B cell (primary cell): ENCODE measurements at regions of chr2 and their contacts with region 1.

Region 1: GRCh38 chr2:65040400-65041261 is 15.6 kb upstream of the CEP68 start:
- DNase-seq: peak; percentile 86
- ATAC-seq: peak; percentile 99
- H3K4me3 ChIP-seq: no peak overlapping the region
- H3K4me3 Mint-ChIP-seq: no peak overlapping the region
- H3K27ac ChIP-seq: no peak overlapping the region
- H3K27ac Mint-ChIP-seq: peak overlapping the region; percentile 42
- H3K4me1 ChIP-seq: peaks cover 5% of the 10 kb centered on the region in 2 donors
- H3K4me1 Mint-ChIP-seq: peaks cover 18% of the 10 kb centered on the region
- H3K27me3 ChIP-seq: no peaks in the 10 kb centered on the region
- H3K27me3 Mint-ChIP-seq: no peaks in the 10 kb centered on the region
- CTCF ChIP-seq: peak; percentile 96

Region 2: DNA sequence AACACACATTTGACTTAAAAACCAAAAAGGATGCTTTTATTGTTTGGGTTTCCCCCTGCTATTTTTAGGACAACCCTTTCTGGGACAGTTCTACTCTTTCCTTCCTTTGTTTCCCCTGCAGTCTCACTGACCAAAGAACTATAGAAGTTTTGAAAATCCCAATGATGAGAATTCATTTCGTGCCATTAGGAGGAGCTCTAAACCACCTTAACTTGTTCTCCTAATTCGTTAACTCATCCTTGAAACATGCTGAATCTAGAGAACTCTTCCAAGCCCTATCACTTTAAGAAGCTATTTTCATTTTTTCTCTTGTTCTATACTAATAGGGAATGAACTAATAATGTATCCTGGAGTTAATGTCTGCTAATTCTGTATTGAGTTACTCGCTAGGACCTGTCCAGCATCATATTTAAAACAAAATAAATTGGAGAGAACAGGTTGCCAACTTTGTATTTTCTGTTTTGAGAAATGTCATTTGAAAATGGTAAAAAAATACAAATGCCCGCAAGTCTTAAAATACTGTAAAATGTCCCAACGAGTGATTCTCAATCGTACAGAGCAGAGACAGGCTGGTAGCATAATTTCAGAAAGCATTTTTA is 453.6 kb before region 1 on chr2:
- CTCF ChIA-PET with region 1: interaction called, 4 read pairs
- POLR2A ChIA-PET with region 1: no interaction called
- intact Hi-C with region 1: loop called (anchors 5 kb)
- DNase-seq: peak; percentile 72
- ATAC-seq: peak; percentile 58
- H3K4me3 ChIP-seq: no peak overlapping the region
- H3K4me3 Mint-ChIP-seq: no peak overlapping the region
- H3K27ac ChIP-seq: no peak overlapping the region
- H3K27ac Mint-ChIP-seq: peak overlapping the region; percentile 32
- H3K4me1 ChIP-seq: peaks cover 0 to 4% of the 10 kb centered on the region in 2 donors
- H3K4me1 Mint-ChIP-seq: peaks cover 14% of the 10 kb centered on the region
- H3K27me3 ChIP-seq: no peaks in the 10 kb centered on the region
- H3K27me3 Mint-ChIP-seq: no peaks in the 10 kb centered on the region
- CTCF ChIP-seq: peak; percentile 88

Region 3: DNA sequence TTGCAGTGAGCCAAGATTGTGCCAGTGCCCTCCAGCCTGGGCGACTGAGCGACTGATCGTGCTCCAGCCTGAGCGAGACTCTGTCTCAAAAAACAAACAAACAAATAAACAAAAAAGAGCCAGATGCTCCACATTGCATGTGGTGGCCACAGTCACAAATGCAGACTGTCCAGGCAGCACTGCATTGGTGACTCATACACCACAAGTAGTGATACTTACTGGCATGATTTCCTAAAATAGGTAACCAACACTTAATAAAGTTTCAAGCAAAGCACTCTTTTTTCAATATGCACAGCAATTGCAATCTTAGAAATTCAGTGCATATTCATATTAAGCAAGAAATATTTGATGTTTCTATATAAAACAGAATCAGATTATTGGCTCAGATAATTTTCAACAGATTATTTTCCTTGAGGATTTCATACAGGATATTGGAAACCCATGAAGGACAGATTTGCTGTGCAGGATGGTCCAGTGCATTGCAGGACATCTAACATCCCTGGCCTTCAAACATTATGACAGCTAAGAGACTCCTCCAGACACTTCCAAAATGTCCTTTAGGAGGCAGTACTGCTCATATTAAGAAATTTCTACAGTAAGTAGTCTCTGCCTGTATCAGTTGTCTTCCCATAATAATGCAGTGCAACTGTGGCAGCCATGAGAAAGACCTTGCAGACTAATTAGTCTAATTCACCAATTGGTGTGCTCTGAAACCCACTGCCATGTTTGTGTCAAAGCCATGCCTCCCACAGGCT is 61.9 kb before region 1 on chr2:
- CTCF ChIA-PET with region 1: interaction called, 10 read pairs
- POLR2A ChIA-PET with region 1: no interaction called
- intact Hi-C with region 1: no loop called
- DNase-seq: peak; percentile 27
- ATAC-seq: no peak
- H3K4me3 ChIP-seq: no peak overlapping the region
- H3K4me3 Mint-ChIP-seq: no peak overlapping the region
- H3K27ac ChIP-seq: no peak overlapping the region
- H3K27ac Mint-ChIP-seq: no peak overlapping the region
- H3K4me1 ChIP-seq: no peaks in the 10 kb centered on the region
- H3K4me1 Mint-ChIP-seq: peaks cover 6% of the 10 kb centered on the region
- H3K27me3 ChIP-seq: no peaks in the 10 kb centered on the region
- H3K27me3 Mint-ChIP-seq: no peaks in the 10 kb centered on the region
- CTCF ChIP-seq: peak; percentile 33

Region 4: GRCh38 chr2:64988420-64989125 is 52.1 kb before region 1 on chr2:
- CTCF ChIA-PET with region 1: interaction called, 6 read pairs
- POLR2A ChIA-PET with region 1: no interaction called
- intact Hi-C with region 1: loop called (anchors 1 kb)
- DNase-seq: peak; percentile 75
- ATAC-seq: peak; percentile 33
- H3K4me3 ChIP-seq: peak overlapping the region; percentile 53 to 87 (median 81)
- H3K4me3 Mint-ChIP-seq: peak overlapping the region; percentile 92
- H3K27ac ChIP-seq: peak overlapping the region in 1 of 2 donors; percentile 53
- H3K27ac Mint-ChIP-seq: peak overlapping the region; percentile 84
- H3K4me1 ChIP-seq: peaks cover 17 to 24% of the 10 kb centered on the region in 2 donors
- H3K4me1 Mint-ChIP-seq: peaks cover 37% of the 10 kb centered on the region
- H3K27me3 ChIP-seq: no peaks in the 10 kb centered on the region
- H3K27me3 Mint-ChIP-seq: no peaks in the 10 kb centered on the region
- CTCF ChIP-seq: peak; percentile 48

Region 5: DNA sequence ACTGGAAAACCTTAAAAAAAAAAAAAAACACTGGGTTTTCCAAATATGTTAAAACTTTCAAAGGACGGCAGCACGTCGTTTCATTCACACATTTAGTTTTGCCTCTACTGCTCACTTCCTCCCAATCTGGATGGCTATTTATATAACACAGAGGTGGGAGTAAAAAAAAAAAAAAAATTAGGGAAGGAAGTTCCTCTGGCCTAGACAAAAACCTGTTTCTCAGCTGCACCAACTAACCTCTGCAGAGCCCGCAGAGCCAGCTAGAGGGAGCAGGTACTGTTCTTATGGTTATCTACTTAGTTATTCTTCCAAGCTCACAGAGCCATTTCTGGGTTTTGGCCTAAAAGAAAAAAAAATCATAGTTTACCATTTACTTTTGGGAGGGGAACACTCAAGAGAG is 23.3 kb before region 1 on chr2:
- CTCF ChIA-PET with region 1: interaction called, 115 read pairs
- POLR2A ChIA-PET with region 1: interaction called, 4 read pairs
- intact Hi-C with region 1: loop called (anchors 1 kb)
- DNase-seq: peak; percentile 73
- ATAC-seq: peak; percentile 82
- H3K4me3 ChIP-seq: no peak overlapping the region
- H3K4me3 Mint-ChIP-seq: peak overlapping the region; percentile 55
- H3K27ac ChIP-seq: no peak overlapping the region
- H3K27ac Mint-ChIP-seq: peak overlapping the region; percentile 72
- H3K4me1 ChIP-seq: peaks cover 29 to 35% of the 10 kb centered on the region in 2 donors
- H3K4me1 Mint-ChIP-seq: peaks cover 48% of the 10 kb centered on the region
- H3K27me3 ChIP-seq: no peaks in the 10 kb centered on the region
- H3K27me3 Mint-ChIP-seq: no peaks in the 10 kb centered on the region
- CTCF ChIP-seq: peak; percentile 69

Region 6: DNA sequence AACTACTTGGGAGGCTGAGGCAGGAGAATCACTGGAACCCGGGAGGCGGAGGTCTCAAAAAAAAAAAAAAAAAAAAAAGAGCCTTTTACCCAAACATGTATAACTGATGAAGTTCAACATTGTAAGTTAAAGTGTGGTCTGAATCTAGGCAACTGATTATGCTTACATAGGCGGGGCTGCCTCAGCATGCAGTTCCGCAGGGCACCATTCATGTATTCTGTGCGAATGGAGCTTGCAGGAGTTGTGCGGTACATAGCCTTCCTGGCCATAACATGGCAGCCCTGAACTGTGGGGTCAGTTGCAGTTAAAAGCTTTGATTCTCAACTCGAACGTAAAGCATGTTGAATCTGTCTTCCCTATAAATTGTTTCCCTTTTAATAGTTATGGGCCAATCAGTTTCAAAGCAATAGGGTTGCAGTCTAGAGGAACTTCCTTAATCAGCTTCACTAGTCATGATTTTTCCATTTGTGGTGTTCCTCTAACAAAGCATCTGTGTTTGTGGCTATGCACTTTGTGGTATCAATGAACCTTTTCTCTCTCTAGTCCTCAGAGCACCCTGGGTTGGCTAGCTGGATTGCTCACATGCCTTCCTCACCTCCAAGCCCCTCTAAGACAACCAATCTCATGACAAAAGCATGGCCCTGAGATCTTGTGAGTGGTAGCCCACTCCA is 15.0 kb before region 1 on chr2:
- CTCF ChIA-PET with region 1: interaction called, 115 read pairs
- POLR2A ChIA-PET with region 1: interaction called, 3 read pairs
- intact Hi-C with region 1: loop called (anchors 2 kb)
- DNase-seq: peak; percentile 66
- ATAC-seq: peak; percentile 31
- H3K4me3 ChIP-seq: peak overlapping the region in 1 of 5 experiments; percentile 24
- H3K4me3 Mint-ChIP-seq: peak overlapping the region; percentile 72
- H3K27ac ChIP-seq: peak overlapping the region; percentile 75 to 86
- H3K27ac Mint-ChIP-seq: peak overlapping the region; percentile 90
- H3K4me1 ChIP-seq: peaks cover 55 to 69% of the 10 kb centered on the region in 2 donors
- H3K4me1 Mint-ChIP-seq: peaks cover 56% of the 10 kb centered on the region
- H3K27me3 ChIP-seq: no peaks in the 10 kb centered on the region
- H3K27me3 Mint-ChIP-seq: no peaks in the 10 kb centered on the region
- CTCF ChIP-seq: no peak

Region 7: GRCh38 chr2:65159906-65160305 is 119.3 kb after region 1 on chr2:
- CTCF ChIA-PET with region 1: no interaction called
- POLR2A ChIA-PET with region 1: no interaction called
- intact Hi-C with region 1: no loop called
- DNase-seq: no peak
- ATAC-seq: no peak
- H3K4me3 ChIP-seq: no peak overlapping the region
- H3K4me3 Mint-ChIP-seq: no peak overlapping the region
- H3K27ac ChIP-seq: no peak overlapping the region
- H3K27ac Mint-ChIP-seq: no peak overlapping the region
- H3K4me1 ChIP-seq: peaks cover 5 to 22% of the 10 kb centered on the region in 2 donors
- H3K4me1 Mint-ChIP-seq: peaks cover 24% of the 10 kb centered on the region
- H3K27me3 ChIP-seq: no peaks in the 10 kb centered on the region
- H3K27me3 Mint-ChIP-seq: no peaks in the 10 kb centered on the region
- CTCF ChIP-seq: no peak

Region 8: DNA sequence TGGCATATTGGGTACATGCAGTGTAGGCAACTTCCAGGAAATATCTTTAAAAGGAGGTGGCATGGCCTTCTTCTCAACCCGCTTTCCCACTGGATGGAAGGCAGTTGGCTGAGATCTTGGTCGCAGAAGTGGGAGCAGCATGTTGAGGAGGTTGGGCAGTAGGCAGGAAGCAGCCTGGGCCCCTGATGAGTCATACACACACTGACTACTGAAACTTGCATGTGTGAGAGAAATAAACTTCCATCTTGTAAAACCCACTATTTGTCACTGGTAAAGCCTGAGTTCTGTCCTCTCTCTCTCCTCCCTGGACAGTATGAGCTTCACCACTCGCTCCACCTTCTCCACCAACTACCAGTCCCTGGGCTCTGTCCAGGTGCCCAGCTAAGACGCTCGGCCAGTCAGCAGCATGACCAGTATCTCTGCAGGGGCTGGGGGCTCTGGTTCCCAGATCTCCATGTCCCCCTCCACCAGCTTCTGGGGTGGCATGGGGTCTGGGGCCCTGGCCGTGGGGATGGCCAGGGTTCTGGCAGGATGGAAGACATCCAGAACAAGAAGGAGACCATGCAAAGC is 625.6 kb after region 1 on chr2:
- CTCF ChIA-PET with region 1: no interaction called
- POLR2A ChIA-PET with region 1: no interaction called
- intact Hi-C with region 1: no loop called
- DNase-seq: no peak
- ATAC-seq: no peak
- H3K4me3 ChIP-seq: no peak overlapping the region
- H3K4me3 Mint-ChIP-seq: no peak overlapping the region
- H3K27ac ChIP-seq: no peak overlapping the region
- H3K27ac Mint-ChIP-seq: no peak overlapping the region
- H3K4me1 ChIP-seq: no peaks in the 10 kb centered on the region
- H3K4me1 Mint-ChIP-seq: no peaks in the 10 kb centered on the region
- H3K27me3 ChIP-seq: peaks cover 0 to 5% (median 0%) of the 10 kb centered on the region in 4 experiments
- H3K27me3 Mint-ChIP-seq: peaks cover 26% of the 10 kb centered on the region
- CTCF ChIP-seq: no peak